Breast epithelium (tissue), 4 donors: ENCODE measurements at regions of chr1 and their contacts with region 1.

Region 1: GRCh38 chr1:100584761-100585745 is 47.1 kb downstream of the GPR88 start:
- DNase-seq: no peak
- H3K4me3 ChIP-seq: no peak overlapping the region
- H3K27ac ChIP-seq: peak overlapping the region in 1 of 2 donors; percentile 36
- H3K4me1 ChIP-seq: no peaks in the 10 kb centered on the region
- H3K27me3 ChIP-seq: no peaks in the 10 kb centered on the region
- CTCF ChIP-seq: no peak
- POLR2A ChIP-seq: no peak

Region 2: DNA sequence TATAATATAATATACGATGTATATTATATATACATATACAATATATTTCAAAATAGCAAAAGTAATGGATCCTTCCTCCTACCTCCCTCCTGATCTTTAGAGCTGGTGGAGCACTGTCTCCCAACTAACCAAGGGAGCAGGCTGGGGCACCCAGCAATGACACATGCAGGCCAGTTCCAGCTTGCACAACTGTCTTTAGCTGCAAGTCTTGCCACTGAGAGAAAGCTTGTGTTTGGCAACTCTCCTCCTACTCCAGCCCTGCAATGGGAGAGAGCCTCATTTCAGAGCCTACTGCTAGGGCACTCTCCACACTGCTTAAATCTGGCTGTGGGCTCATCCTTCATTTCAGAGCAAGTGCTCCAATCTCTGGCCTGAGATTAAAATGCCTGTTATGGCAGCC is 1881.4 kb after region 1 on chr1:
- intact Hi-C with region 1: loop called (anchors 10 kb)
- DNase-seq: no peak
- H3K4me3 ChIP-seq: no peak overlapping the region
- H3K27ac ChIP-seq: no peak overlapping the region
- H3K4me1 ChIP-seq: no peaks in the 10 kb centered on the region
- H3K27me3 ChIP-seq: no peaks in the 10 kb centered on the region
- CTCF ChIP-seq: no peak
- POLR2A ChIP-seq: no peak